ENCODE measurements at regions of chr1 and their contacts with region 1.

Region 1: GRCh38 chr1:227225715-227226346 is 92.5 kb downstream of the CDC42BPA start:
- DNase-seq: no peak
- ATAC-seq: peak; percentile 78
- H3K4me3 ChIP-seq: no peak overlapping the region
- H3K27ac ChIP-seq: no peak overlapping the region
- H3K4me1 ChIP-seq: peaks cover 8% of the 10 kb centered on the region
- H3K27me3 ChIP-seq: no peaks in the 10 kb centered on the region
- CTCF ChIP-seq: no peak

Region 2: GRCh38 chr1:227318003-227318852 is 92.4 kb after region 1 on chr1 and contains the start of gene CDC42BPA:
- intact Hi-C with region 1: loop called (anchors 10 kb)
- DNase-seq: peak; percentile 93
- ATAC-seq: peak; percentile 94
- H3K4me3 ChIP-seq: peak within 1 kb of the TSS; percentile 80
- H3K27ac ChIP-seq: peak within 1 kb of the TSS; percentile 94
- H3K4me1 ChIP-seq: no peaks in the 10 kb centered on the region
- H3K27me3 ChIP-seq: no peaks in the 10 kb centered on the region
- CTCF ChIP-seq: no peak
- total RNA-seq, gene CDC42BPA: 41.8 TPM

Region 3: DNA sequence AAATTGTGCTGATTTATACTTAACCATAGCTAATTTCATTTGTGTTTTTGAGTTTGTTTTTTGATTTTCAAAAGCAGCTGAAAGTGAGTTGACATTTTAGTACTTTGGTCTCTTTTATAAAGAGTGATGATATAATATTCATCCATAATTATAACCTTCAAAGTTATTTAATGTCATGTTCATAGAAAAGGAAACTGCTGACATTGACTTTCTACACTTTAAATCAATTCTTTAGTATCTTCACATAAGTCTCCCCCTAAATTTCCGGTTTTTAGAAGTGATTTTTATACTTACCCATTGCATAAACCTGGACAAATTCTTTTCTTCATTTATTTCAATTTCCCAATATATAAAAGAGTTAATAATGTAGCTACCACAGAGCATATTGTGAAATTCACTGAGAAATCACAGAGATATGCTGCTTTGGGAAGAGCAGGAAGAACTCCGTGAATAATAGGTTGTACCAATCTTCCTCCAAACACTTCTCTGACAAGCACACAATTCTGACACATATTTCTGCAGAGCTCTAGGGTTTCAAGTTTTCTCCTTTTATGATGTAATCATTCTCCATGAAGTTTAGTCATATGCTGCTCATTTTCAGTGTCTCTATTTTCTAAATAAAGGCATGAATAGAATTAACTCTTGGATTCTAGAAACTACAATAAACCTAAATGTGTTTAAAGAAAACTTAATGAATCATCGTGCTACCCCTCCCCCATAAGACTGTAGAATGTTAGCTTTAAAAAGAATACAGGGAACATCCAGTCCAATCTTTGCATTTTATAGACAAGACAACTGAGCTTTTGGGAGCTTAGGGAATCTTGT is 118.1 kb after region 1 on chr1:
- intact Hi-C with region 1: no loop called
- DNase-seq: no peak
- ATAC-seq: peak; percentile 49
- H3K4me3 ChIP-seq: no peak overlapping the region
- H3K27ac ChIP-seq: no peak overlapping the region
- H3K4me1 ChIP-seq: peaks cover 7% of the 10 kb centered on the region
- H3K27me3 ChIP-seq: no peaks in the 10 kb centered on the region
- CTCF ChIP-seq: no peak

Measured in upper lobe of right lung (tissue), 1 donor.